Activated B cell treated with CpG ODN at 0.5 μM for 24 hours (primary cell): ENCODE measurements at regions of chr9 and their contacts with region 1.

Region 1: GRCh38 chr9:100426530-100427428 is at the start of gene MSANTD3:
- DNase-seq: peak; percentile 59
- ATAC-seq: peak; percentile 85
- H3K4me3 Mint-ChIP-seq: peak within 1 kb of the TSS; percentile 95
- H3K27ac Mint-ChIP-seq: peak within 1 kb of the TSS; percentile 91
- H3K4me1 Mint-ChIP-seq: peaks cover 17% of the 10 kb centered on the region
- H3K27me3 Mint-ChIP-seq: peaks cover 4% of the 10 kb centered on the region
- CTCF ChIP-seq: no peak
- total RNA-seq, gene MSANTD3: 13.0 and 13.2 TPM in 2 replicates

Region 2: DNA sequence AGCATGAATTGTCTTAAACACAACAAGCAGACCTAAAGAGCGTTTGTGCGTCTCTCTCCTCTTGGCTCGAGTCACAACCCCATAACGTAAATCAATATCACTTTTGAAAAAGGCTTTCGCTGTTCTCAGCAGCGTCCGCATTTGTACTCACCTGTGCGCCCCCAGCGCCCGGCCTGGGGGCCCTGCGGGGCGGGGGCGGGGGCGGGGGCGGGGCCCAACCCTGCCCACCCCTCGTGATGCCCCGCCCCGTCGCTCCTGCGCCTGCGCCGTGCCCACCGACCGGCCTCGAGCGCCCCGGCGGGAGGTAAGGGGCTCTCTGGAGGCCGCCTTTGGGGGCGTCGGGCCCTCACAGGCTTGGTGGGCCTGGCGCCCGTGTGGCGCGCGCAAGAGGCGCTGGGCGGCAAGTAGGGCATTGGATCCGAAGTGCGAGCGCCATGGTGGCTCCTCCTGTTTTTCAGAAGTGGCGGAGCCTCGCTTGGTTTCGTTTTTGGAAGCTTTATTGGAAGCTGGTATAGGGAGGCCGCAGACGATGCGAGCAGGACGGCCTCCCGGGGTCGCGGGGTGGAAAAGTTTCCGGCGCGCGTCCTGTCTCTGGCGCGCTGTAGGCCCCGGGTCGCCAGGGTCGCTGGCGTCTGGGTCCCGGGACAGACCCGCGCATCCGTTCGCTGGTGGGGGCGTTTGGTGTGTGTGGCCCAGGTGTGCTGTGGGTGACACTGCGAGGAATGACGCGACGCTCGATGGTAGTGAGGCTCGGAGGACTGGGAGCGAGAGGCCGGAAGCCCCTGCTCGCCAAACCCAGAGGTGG is 520.2 kb before region 1 on chr9 and contains the start of gene STX17:
- CTCF ChIA-PET with region 1: no interaction called
- POLR2A ChIA-PET with region 1: no interaction called
- intact Hi-C with region 1: loop called (anchors 10 kb)
- DNase-seq: peak; percentile 90
- ATAC-seq: peak; percentile 87
- H3K4me3 Mint-ChIP-seq: peak within 1 kb of the TSS; percentile 98
- H3K27ac Mint-ChIP-seq: peak within 1 kb of the TSS; percentile 95
- H3K4me1 Mint-ChIP-seq: peaks cover 17% of the 10 kb centered on the region
- H3K27me3 Mint-ChIP-seq: no peaks in the 10 kb centered on the region
- CTCF ChIP-seq: no peak
- total RNA-seq, gene STX17: 32.2 and 39.2 TPM in 2 replicates

Region 3: DNA sequence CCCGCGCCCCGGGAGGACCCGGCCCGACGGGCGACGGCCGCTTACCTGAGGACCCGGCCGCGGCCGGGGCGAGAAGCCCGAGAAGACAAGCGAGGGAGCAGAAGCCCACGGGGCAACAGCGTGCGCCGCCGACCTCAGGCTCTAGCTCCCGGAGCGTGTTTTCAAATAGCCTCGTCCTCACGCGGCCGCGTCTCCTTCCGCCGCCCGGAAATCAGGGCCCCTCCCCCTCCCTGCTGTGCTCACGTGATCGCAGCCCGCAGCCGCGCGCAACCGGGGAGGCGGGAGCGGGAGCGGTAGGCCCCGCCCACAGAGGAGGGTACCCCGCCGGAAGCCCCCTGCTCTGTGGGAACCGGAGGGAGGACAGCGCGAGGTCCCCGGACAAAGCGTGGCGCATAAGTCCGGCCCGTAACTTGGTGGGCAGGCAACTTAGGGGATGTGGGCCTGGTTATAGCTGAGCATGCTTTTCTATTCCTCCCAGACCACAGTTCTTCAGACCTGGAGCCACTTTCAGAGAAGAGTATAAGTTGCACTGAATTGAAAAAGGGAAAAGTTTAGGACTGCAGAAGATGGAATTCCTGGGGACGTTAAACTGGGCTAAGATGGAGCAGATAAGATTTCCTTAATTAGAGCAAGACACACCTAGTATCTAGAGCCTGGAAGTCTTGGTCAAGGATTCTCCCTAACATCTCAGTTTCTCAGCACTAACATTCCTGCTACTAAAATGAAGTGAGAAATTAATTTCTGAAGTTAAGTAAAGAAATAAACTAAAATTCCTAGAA is 73.9 kb before region 1 on chr9 and contains the start of gene TEX10:
- CTCF ChIA-PET with region 1: interaction called, 3 read pairs
- POLR2A ChIA-PET with region 1: interaction called, 5 read pairs
- intact Hi-C with region 1: loop called (anchors 1 kb)
- DNase-seq: peak; percentile 89
- ATAC-seq: peak; percentile 93
- H3K4me3 Mint-ChIP-seq: peak within 1 kb of the TSS; percentile 90
- H3K27ac Mint-ChIP-seq: peak within 1 kb of the TSS; percentile 87
- H3K4me1 Mint-ChIP-seq: peaks cover 67% of the 10 kb centered on the region
- H3K27me3 Mint-ChIP-seq: no peaks in the 10 kb centered on the region
- CTCF ChIP-seq: no peak
- total RNA-seq, gene TEX10: 26.5 and 28.7 TPM in 2 replicates

Region 4: GRCh38 chr9:100411472-100412283 is 15.1 kb before region 1 on chr9:
- CTCF ChIA-PET with region 1: interaction called, 3 read pairs
- POLR2A ChIA-PET with region 1: interaction called, 7 read pairs
- intact Hi-C with region 1: loop called (anchors 1 kb)
- DNase-seq: peak; percentile 76
- ATAC-seq: peak; percentile 100
- H3K4me3 Mint-ChIP-seq: peak overlapping the region; percentile 89
- H3K27ac Mint-ChIP-seq: peak overlapping the region; percentile 78
- H3K4me1 Mint-ChIP-seq: peaks cover 14% of the 10 kb centered on the region
- H3K27me3 Mint-ChIP-seq: peaks cover 9% of the 10 kb centered on the region
- CTCF ChIP-seq: no peak

Region 5: DNA sequence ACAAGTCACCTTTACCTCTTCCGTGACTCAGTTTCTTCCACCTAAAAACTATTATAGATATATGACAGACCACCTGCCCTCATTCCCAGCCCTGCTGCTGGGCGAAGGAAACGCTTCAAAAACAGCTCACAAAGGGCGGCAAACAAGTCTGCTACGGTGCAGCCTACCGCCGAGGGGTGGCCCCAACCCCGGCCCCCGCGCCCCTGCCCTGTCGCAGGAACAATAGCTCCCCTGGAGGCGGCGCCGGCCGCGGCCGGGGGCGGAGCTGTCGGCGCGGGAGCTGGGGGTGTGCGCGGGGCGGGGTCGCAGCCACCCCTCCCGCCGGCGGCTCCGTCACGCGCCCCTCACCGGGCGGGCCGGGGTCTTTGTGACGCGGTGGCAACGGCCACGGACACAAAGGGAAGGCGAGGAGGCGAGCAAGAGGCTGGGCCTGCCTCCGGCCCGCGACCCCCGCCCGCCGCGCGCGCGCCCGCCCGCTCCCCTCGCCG is 46.1 kb after region 1 on chr9 and contains the start of gene TMEFF1:
- CTCF ChIA-PET with region 1: no interaction called
- POLR2A ChIA-PET with region 1: no interaction called
- intact Hi-C with region 1: loop called (anchors 2 kb)
- DNase-seq: peak; percentile 41
- ATAC-seq: peak; percentile 71
- H3K4me3 Mint-ChIP-seq: peak within 1 kb of the TSS; percentile 67
- H3K27ac Mint-ChIP-seq: no peak within 1 kb of the TSS
- H3K4me1 Mint-ChIP-seq: peaks cover 11% of the 10 kb centered on the region
- H3K27me3 Mint-ChIP-seq: peaks cover 28% of the 10 kb centered on the region
- CTCF ChIP-seq: no peak
- total RNA-seq, gene TMEFF1: 0.29 TPM in 1 of 2 replicates, not detected in the other

Region 6: GRCh38 chr9:100554935-100555401 is 128.2 kb after region 1 on chr9:
- CTCF ChIA-PET with region 1: no interaction called
- POLR2A ChIA-PET with region 1: no interaction called
- intact Hi-C with region 1: no loop called
- DNase-seq: no peak
- ATAC-seq: no peak
- H3K4me3 Mint-ChIP-seq: no peak overlapping the region
- H3K27ac Mint-ChIP-seq: no peak overlapping the region
- H3K4me1 Mint-ChIP-seq: no peaks in the 10 kb centered on the region
- H3K27me3 Mint-ChIP-seq: no peaks in the 10 kb centered on the region
- CTCF ChIP-seq: no peak